Activated T-helper 1 cell treated with anti-CD3 and anti-CD28 coated beads, Interleukin-12 subunit alpha, Interleukin-12 subunit beta, Interleukin-2, Interleukin-4 antibody, amounts not matched to agents 30 ng/mL and 10 ng/mL and 1 ng/mL, durations not matched to agents 14 hours and 24 hours and 36 hours (primary cell): ENCODE measurements at regions of chr16 and their contacts with region 1.

Region 1: DNA sequence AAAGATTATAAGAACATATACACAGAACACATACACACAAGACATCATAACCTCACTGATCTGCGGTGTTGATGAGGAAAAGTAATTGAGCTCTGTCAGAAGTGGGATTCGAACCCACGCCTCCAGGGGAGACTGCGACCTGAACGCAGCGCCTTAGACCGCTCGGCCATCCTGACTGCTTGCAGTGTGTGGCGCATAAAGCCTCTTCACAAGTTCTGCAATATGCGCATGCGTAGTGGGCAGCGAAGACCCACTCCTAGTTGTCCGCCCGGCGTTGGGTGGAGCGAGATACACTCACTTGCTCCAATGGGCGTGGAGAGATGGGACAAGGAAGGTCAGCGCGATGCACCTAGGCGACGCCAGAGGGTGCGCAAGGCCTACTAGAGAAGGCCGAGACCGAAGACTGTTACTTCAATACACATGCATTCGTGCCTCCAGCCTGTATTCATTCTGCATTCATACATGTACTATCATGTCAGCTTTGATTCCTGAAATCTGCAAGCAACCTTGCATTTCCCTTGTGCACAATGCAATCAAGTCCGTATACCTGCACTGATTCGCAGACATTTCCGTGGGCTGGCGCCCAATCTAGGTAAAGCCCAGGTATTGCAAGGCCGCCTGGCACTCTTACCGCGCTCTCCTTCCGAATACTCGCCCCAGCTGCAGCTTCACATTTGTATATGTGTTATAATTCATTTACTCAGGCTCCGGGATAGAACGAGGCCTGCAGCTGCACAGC is 16.1 kb upstream of the PLLP start:
- DNase-seq: peak; percentile 99
- H3K4me3 Mint-ChIP-seq: no peak overlapping the region
- H3K27ac Mint-ChIP-seq: no peak overlapping the region
- H3K4me1 Mint-ChIP-seq: peaks cover 18% of the 10 kb centered on the region
- H3K27me3 Mint-ChIP-seq: peaks cover 7% of the 10 kb centered on the region

Region 2: DNA sequence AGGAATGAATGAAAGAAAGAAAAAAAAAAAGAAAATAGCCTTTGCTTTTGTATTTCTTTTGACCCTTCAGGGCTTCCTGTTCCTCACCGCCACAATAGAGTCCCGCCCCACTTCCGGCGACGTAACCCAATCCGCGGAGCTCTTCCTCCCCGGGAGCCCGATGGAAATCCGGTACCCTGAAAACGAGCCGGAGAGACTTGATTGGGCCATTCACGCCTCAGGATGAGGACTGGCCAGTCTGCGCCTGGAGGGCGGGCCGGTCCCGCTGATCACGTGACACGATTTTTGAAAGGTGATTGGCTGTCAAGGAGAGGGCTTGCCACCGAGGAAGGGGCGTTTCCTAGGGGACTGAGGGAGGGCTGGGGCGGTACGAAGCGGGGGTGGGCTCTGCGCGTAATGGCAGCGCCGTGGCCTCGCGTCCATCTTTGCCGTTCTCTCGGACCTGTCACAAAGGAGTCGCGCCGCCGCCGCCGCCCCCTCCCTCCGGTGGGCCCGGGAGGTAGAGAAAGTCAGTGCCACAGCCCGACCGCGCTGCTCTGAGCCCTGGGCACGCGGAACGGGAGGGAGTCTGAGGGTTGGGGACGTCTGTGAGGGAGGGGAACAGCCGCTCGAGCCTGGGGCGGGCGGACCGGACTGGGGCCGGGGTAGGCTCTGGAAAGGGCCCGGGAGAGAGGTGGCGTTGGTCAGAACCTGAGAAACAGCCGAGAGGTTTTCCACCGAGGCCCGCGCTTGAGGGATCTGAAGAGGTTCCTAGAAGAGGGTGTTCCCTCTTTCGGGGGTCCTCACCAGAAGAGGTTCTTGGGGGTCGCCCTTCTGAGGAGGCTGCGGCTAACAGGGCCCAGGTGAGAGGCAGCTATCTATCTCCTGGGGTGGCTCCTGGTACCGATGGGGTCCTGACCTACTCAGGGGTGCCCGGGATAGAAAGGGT is 114.3 kb before region 1 on chr16 and contains the starts of genes PSME3IP1 and RSPRY1:
- intact Hi-C with region 1: loop called (anchors 1 kb)
- DNase-seq: peak; percentile 99
- H3K4me3 Mint-ChIP-seq: peak within 1 kb of the TSS; percentile 96
- H3K27ac Mint-ChIP-seq: peak within 1 kb of the TSS; percentile 98
- H3K4me1 Mint-ChIP-seq: peaks cover 44% of the 10 kb centered on the region
- H3K27me3 Mint-ChIP-seq: no peaks in the 10 kb centered on the region
- total RNA-seq, gene PSME3IP1: 116 and 124 TPM in 2 replicates
- total RNA-seq, gene RSPRY1: 36.0 and 36.5 TPM in 2 replicates

Region 3: DNA sequence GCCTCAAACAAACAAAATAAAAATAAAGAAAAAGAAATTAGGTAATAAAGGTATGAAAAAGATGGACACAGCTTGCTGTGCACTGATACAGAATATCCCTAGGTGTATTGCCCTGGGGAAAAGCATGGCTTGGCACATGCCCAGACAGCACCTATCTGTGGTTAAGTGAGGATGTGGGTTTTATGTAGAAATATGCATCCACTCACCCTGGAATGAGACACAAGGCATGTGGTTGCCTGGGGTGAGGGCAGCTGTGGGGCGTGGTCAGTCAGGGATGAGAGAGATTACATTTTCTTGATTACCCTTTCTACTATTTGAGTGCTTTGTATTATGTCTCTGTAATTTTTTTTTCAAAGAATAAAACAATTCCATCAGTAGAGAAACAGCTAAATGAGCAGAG is 23.0 kb before region 1 on chr16:
- intact Hi-C with region 1: no loop called
- DNase-seq: peak; percentile 49
- H3K4me3 Mint-ChIP-seq: peak overlapping the region; percentile 51
- H3K27ac Mint-ChIP-seq: no peak overlapping the region
- H3K4me1 Mint-ChIP-seq: peaks cover 16% of the 10 kb centered on the region
- H3K27me3 Mint-ChIP-seq: peaks cover 19% of the 10 kb centered on the region

Region 4: DNA sequence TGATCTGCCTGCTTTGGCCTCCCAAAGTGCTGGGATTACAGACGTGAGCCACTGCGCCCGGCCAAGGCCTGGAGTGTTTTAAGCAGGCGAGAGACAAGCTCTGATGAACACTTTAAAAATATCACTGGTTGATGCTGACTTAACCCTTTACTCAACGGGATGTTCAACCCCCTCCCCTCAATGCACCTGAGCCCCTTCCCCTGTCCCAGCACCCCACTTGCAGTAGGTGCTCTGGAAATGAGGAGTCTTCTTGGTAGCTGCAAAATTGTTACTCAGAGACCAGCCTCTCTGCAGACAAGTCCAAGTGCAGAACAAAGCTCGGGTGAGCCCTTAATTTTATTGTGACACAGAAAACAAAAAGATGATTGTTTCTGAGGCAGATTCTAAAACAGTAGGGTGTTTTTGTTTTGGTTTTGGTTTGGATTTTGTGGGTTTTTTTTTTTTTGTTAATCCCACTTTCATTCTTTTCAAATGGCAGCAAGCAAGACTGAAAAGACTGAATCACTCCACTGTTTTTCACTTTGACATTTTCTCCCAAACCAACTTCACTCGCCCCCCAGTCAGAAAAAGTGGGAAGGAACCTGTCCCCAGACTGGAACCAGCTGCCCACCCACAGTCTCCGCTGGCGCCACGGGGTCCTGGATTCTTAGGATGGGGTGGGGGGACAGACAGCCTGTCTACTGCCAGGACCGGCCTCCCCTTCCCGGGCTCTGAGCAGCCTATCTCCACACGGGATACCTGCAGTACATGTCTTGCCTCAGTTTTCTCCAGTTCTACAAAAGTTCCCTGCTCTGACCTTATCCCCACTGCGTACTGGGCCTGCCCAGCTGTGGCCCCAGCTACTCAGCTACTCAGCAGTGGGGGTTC is 10.9 kb before region 1 on chr16:
- intact Hi-C with region 1: loop called (anchors 1 kb)
- DNase-seq: no peak
- H3K4me3 Mint-ChIP-seq: no peak overlapping the region
- H3K27ac Mint-ChIP-seq: no peak overlapping the region
- H3K4me1 Mint-ChIP-seq: peaks cover 22% of the 10 kb centered on the region
- H3K27me3 Mint-ChIP-seq: peaks cover 10% of the 10 kb centered on the region

Region 5: DNA sequence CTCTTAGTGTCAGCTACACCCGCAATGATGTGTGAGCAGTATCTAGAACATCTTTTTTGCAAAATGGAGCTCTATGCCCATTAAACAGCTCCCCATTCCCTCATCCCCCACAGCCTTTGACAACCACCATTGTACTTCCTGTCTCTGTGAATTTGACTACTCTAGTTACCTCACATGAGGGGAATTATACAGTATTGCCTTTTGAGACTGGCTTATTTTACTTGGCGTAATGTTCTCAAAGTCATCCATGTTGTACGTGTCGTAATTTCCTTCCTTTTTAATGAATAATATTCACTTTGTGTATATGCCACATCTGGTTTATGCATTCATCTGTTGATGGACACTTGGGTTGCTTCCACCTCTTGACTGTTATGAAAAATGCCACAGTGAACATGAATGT is 34.8 kb after region 1 on chr16:
- intact Hi-C with region 1: no loop called
- DNase-seq: no peak
- H3K4me3 Mint-ChIP-seq: no peak overlapping the region
- H3K27ac Mint-ChIP-seq: no peak overlapping the region
- H3K4me1 Mint-ChIP-seq: peaks cover 15% of the 10 kb centered on the region
- H3K27me3 Mint-ChIP-seq: peaks cover 30% of the 10 kb centered on the region

Region 6: GRCh38 chr16:57447186-57447962 is 146.8 kb after region 1 on chr16 and contains the starts of genes CIAPIN1 and COQ9:
- intact Hi-C with region 1: loop called (anchors 1 kb)
- DNase-seq: peak; percentile 90
- H3K4me3 Mint-ChIP-seq: peak within 1 kb of the TSS; percentile 94
- H3K27ac Mint-ChIP-seq: peak within 1 kb of the TSS; percentile 90
- H3K4me1 Mint-ChIP-seq: peaks cover 37% of the 10 kb centered on the region
- H3K27me3 Mint-ChIP-seq: no peaks in the 10 kb centered on the region
- total RNA-seq, gene CIAPIN1: 98.0 and 98.4 TPM in 2 replicates
- total RNA-seq, gene COQ9: 51.2 and 51.6 TPM in 2 replicates

Region 7: DNA sequence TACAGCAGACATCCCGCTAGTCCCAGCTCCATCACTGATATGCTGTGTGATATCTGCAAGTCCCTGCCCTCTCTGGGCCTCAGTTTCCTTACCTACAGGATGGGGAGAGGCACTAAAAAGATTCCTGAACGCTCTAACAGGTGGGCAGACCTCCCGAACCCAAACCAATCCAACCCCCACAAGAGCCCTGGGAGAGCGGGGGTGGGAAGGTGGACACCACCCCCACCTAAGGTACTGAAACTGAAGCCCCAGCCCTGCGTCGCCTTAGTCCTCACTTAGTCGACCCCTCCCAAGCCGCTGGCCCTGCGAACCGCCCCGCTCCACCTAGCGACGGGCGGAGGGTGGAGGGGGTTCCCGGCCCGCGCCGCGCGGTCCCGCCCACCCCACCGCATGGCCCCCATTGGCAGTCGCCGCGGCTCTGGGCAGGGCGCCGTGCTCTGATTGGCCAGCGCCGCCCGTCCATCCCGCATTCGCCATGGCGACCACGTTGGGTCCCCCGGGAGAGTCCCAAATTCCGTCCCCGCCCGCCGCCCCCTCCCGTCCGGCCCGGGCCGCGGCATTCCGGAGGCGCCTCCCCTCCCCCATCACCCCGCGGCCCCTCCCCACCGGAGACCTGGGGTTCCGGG is 235.2 kb after region 1 on chr16:
- intact Hi-C with region 1: loop called (anchors 1 kb)
- DNase-seq: peak; percentile 92
- H3K4me3 Mint-ChIP-seq: peak overlapping the region; percentile 78
- H3K27ac Mint-ChIP-seq: peak overlapping the region; percentile 93
- H3K4me1 Mint-ChIP-seq: peaks cover 62% of the 10 kb centered on the region
- H3K27me3 Mint-ChIP-seq: no peaks in the 10 kb centered on the region